AG04449 (cell line): ENCODE measurements at regions of chr5 and their contacts with region 1.

Region 1: DNA sequence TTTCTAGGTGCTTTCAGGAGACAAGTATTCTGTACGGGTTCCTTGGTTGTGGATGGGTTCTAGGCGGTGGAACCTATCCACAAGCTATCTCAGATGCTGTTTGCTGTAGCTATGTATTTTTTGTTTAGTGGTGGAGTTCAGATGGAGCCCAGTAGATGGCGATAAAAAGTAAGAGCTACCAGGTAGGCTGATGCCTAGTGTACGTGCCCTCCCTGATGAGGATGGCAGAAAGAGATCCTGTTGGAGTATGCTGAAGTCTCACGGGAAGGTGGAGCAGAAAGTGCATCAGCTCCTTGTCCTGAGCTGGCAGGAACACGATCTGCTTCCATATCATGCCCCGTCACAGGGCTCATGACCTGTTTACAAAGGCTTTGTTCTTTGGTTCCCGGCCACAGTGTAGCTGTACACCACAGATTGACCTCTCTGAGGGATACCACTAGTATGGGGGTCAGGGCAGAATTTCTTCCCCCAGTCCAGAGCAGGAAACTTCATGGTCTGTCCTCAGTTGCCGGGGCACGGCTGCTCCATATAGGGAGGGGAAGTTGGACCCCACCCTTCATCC is 12.6 kb upstream of the UGT3A2 start:
- DNase-seq: no peak
- H3K4me3 ChIP-seq: no peak overlapping the region
- CTCF ChIP-seq: peak; percentile 58

Region 2: DNA sequence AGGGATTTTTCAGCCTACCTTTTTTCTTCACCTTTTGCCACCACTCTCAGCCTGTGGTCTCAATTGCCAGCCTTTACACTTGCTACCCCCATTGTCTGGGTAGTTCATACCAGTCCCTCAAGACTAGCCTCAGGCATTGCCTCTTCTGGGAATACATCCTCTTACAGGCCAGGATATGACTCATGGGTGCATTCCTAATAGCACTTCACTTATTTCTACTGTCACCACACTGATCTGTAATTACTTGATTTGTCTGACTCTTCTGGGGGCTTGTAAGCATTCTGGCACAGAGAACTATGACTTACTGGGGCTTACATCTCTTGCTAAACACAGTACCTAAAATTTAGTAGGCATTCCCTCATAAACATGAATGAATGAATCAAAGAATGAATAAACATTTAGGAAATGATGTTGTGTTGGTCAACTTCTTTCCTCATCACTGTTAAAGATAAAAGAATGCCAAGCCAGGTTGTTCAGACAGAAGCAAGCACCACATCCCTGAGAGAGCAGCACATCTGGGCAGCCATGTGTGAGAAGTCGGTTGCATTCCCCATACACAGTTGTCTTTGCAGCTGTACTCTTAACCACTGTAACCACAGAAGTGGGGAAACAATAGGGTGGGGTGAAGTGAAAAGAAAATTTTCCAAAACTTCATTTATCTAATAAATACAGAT is 195.0 kb before region 1 on chr5:
- CTCF ChIA-PET with region 1: no interaction called
- POLR2A ChIA-PET with region 1: no interaction called
- DNase-seq: peak; percentile 68
- H3K4me3 ChIP-seq: no peak overlapping the region
- CTCF ChIP-seq: no peak

Region 3: DNA sequence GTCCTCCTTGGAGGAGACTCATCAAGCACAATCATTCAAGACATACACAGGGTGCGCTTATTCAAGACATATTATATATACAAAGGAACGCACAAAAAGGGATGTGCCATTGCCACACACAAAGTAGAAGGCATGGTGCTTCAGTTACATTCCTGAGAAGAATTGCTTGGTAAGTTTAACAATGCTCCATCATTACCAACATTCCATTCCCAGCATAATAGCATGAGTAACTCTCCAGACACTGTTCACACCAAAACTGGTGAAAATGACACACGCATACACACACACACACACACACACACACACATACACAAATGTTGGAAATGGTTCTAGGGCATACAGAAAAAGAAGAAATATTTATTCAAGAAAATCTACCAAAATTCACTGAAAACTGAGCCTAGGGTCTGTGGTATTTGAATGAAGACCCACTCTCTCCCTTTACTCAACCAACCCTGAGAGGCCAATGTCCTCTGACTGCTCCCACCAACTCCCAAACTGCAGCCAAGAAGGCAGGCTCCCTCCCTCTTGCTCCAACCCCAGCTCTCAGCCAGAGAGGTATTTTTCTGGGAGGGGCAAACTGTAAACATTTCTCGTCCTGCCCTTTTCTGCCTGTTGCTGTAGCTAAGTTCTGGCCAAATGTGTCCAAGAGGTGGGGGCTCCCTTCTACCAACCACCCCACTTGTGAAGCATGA is 107.9 kb before region 1 on chr5:
- CTCF ChIA-PET with region 1: no interaction called
- POLR2A ChIA-PET with region 1: no interaction called
- DNase-seq: no peak
- H3K4me3 ChIP-seq: no peak overlapping the region
- CTCF ChIP-seq: no peak

Region 4: GRCh38 chr5:36089989-36090564 is 10.8 kb after region 1 on chr5:
- CTCF ChIA-PET with region 1: interaction called, 33 read pairs
- POLR2A ChIA-PET with region 1: no interaction called
- DNase-seq: no peak
- H3K4me3 ChIP-seq: no peak overlapping the region
- CTCF ChIP-seq: peak; percentile 49

Region 5: DNA sequence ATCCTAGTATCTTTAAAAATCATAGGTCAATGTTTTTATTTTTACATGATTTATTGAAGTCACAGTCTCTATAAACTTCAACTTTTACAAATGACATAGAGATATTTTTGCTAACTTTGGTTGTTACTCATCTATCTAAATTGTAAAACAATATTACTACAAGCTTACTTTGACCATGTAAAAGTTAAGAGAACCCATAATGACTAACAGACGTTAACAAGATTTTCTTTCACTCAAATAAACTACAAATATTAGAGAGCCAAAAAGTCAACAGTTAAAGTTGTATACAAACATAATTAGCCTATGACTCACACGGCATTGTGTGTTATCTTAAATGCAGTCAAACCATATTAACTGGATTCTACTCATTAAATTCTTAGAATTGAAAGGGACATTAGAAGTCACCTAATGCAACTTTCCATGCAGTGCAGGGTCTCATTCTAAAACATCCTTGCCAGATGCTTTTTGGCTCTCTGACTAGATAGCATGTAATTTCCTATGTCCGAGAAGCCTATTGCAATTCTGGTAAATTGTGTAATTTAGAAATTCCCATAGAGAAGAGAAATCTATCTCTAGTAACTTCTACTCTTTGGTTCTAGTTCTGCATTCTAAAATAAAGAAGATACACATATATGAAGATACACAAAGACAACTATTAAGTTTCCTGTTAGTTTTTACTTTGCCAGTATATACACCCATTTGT is 29.6 kb after region 1 on chr5:
- CTCF ChIA-PET with region 1: interaction called, 11 read pairs
- POLR2A ChIA-PET with region 1: no interaction called
- DNase-seq: no peak
- H3K4me3 ChIP-seq: no peak overlapping the region
- CTCF ChIP-seq: no peak

Region 6: DNA sequence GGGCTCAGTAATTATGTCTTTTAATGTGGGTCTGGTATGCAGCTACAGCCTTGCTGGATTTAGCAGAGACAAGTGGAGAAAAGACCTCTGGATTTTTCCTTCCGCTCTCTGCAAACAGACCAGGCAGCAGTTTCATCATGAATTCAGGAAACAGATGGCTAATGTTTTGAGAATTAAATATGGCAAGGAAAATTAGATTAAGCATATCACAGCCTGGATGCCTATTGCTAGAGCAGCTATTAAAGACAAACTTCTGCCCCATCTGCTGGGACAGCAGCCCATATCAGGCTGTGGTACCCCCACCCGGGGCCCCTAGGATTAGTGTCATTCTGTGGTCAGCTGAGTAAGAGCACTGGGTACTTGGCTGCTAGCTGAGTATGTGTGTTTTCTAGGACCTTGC is 78.9 kb after region 1 on chr5:
- CTCF ChIA-PET with region 1: interaction called, 17 read pairs
- POLR2A ChIA-PET with region 1: no interaction called
- DNase-seq: no peak
- H3K4me3 ChIP-seq: no peak overlapping the region
- CTCF ChIP-seq: no peak

Region 7: DNA sequence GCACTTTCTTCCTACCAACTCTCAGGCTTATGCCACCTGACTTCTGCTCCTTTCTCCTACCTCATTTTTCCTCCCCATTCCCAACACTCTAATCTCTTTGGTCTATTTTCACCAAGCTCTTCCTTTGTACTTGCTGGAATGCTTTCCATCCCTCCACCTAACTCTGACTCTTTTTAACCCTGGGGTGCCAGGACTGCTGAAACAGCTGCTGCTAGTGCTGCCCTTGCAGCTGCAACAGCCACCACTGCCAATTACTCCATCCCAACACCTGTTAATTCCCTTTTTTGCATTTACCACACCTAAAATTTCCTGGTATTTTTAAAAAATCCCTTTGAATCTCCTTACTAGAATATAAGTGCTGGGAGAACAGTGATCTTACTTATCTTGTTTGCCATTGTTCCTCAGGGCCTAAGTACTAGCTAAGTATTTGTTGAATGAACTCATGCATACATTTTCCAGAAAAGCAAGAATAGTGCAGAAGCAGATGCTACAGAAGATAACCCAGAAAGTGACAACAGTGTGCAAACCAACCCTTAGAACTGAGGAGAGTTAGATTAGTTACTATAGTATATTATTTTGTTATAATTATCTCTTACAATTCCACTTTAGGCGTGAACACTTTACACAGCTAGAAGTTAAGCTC is 151.0 kb after region 1 on chr5:
- CTCF ChIA-PET with region 1: no interaction called
- POLR2A ChIA-PET with region 1: no interaction called
- DNase-seq: no peak
- H3K4me3 ChIP-seq: no peak overlapping the region
- CTCF ChIP-seq: no peak

Region 8: GRCh38 chr5:36305571-36306326 is 226.5 kb after region 1 on chr5:
- CTCF ChIA-PET with region 1: interaction called, 30 read pairs
- POLR2A ChIA-PET with region 1: no interaction called
- DNase-seq: no peak
- H3K4me3 ChIP-seq: no peak overlapping the region
- CTCF ChIP-seq: peak; percentile 59

Region 9: DNA sequence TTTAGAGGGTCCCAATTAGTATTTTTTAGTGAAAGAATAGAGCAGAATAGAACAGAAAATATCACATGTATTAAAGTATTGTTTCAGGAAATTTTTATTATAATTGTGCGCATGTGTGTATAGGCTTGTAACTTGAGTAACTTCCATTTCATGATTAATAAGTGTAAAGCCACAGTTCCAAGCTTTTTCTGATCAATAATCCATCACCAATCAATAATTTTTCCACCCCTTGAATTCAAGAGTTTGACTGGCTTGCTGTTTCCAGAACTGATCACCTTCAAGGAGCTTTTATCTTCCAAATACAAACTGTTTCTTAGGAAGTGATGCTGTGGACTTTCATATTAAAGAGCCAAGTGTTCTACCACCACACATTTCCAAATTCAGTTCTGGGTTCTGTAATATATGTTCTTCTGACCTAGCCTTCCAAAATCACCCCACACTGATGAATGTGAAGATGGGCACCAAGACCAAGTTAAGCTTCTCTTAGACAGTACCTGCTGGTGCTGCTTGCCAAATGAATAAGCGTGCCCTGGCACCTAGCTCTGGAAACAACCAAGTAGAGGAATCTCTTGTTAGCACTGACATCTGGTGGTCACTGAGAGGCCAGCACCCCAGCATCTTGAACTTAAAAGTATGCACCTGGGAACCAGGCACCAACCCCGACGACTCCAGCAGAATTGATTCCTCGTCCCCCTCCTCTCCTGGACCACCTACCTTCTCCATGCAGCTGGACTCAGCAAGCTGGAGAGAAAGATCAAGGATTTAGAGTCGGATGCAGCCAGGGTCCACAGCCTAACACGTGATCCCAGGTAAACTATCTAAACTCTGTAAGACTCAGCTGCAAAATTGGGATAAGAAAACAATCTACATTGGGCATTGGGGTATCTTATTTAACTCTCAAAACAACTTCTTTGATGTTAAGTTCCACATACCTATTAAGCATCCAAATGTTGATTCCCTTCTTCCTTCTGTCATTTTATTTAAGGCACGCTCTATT is 616.7 kb after region 1 on chr5:
- CTCF ChIA-PET with region 1: interaction called, 20 read pairs
- POLR2A ChIA-PET with region 1: no interaction called
- DNase-seq: no peak
- H3K4me3 ChIP-seq: no peak overlapping the region
- CTCF ChIP-seq: peak; percentile 70